A673 (cell line): ENCODE measurements at regions of chr3 and their contacts with region 1.

Region 1: GRCh38 chr3:31790193-31791089 is 190.6 kb downstream of the OSBPL10 start:
- DNase-seq: no peak
- H3K4me3 ChIP-seq: no peak overlapping the region
- H3K27ac ChIP-seq: no peak overlapping the region
- H3K4me1 ChIP-seq: peaks cover 6% of the 10 kb centered on the region
- H3K27me3 ChIP-seq: no peaks in the 10 kb centered on the region
- CTCF ChIP-seq: no peak

Region 2: GRCh38 chr3:31166249-31166885 is 624.1 kb before region 1 on chr3:
- CTCF ChIA-PET with region 1: no interaction called
- POLR2A ChIA-PET with region 1: interaction called, 11 read pairs
- intact Hi-C with region 1: no loop called
- DNase-seq: peak; percentile 7
- H3K4me3 ChIP-seq: no peak overlapping the region
- H3K27ac ChIP-seq: no peak overlapping the region
- H3K4me1 ChIP-seq: no peaks in the 10 kb centered on the region
- H3K27me3 ChIP-seq: no peaks in the 10 kb centered on the region
- CTCF ChIP-seq: no peak